ENCODE measurements at regions of chr1 and their contacts with region 1.

Region 1: GRCh38 chr1:151594143-151594625 is 17.7 kb upstream of the SNX27 start:
- DNase-seq: peak; percentile 91
- H3K4me3 Mint-ChIP-seq: peak overlapping the region; percentile 46
- H3K27ac Mint-ChIP-seq: no peak overlapping the region
- H3K4me1 Mint-ChIP-seq: peaks cover 9% of the 10 kb centered on the region
- H3K27me3 Mint-ChIP-seq: peaks cover 3% of the 10 kb centered on the region

Region 2: DNA sequence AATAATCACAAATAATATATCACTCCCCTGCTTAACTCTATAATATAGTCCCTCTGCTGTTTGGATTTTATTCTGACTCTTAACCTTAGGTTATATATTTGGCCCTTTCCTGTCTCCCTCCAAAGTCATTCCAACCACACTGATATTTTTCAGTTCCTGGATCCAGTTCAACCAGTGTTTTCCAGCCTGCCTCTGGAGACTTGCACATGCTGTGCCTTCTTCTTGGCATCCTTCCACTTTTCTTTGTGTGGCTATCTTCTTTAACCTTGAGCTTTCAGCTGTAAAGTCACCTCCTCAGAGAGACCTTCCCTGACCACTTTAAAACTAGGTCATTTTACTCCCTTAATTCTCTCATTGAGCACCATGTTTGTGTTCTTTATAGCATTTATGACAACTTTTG is 638.9 kb before region 1 on chr1:
- CTCF ChIA-PET with region 1: no interaction called
- POLR2A ChIA-PET with region 1: no interaction called
- intact Hi-C with region 1: no loop called
- DNase-seq: no peak
- H3K4me3 Mint-ChIP-seq: no peak overlapping the region
- H3K27ac Mint-ChIP-seq: no peak overlapping the region
- H3K4me1 Mint-ChIP-seq: peaks cover 9% of the 10 kb centered on the region
- H3K27me3 Mint-ChIP-seq: no peaks in the 10 kb centered on the region

Region 3: DNA sequence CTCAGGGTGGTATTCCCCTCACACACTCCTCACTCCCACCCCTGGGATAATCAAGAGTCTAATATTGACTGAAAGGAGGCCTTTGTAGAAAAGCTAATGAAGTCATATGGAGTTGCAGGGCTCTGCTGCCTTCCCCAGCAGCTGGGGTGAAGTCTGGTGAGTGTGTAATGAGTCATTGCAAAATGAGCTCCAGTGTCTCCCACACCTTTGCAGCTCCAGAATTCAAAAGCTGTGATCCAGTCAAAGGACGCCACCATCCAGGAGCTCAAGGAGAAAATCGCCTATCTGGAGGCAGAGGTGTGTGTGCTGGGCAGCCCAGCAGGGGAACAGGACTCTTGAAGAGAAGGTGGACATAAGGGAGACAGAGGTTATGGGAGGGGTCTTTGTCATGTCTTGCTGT is 14.7 kb before region 1 on chr1:
- CTCF ChIA-PET with region 1: interaction called, 10 read pairs
- POLR2A ChIA-PET with region 1: no interaction called
- intact Hi-C with region 1: no loop called
- DNase-seq: no peak
- H3K4me3 Mint-ChIP-seq: no peak overlapping the region
- H3K27ac Mint-ChIP-seq: no peak overlapping the region
- H3K4me1 Mint-ChIP-seq: peaks cover 7% of the 10 kb centered on the region
- H3K27me3 Mint-ChIP-seq: no peaks in the 10 kb centered on the region

Region 4: DNA sequence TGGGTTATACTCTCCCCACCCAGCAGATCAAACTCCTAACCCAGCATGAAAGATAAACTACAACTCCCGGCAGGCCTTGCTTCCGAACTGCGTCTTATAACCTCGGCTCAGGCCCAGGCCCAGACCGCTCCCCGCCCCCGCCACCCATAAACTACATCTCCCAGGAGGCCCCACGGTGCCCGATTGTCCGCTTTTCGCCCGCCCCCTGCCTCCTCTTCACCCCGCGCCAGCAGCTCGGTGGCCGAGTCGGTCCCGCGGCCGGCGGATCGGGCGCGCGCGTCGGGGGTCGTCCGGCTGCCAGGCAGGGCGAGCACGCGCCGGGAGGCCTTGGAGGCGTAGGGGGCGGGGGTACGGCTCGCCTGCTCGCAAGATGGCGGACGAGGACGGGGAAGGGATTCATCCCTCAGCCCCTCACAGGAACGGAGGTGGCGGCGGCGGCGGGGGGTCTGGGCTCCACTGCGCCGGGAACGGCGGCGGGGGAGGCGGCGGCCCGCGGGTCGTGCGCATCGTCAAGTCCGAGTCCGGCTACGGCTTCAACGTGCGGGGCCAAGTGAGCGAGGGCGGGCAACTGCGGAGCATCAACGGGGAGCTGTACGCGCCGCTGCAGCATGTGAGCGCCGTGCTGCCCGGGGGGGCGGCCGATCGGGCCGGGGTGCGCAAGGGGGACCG is 17.8 kb after region 1 on chr1 and contains the start of gene SNX27:
- CTCF ChIA-PET with region 1: interaction called, 10 read pairs
- POLR2A ChIA-PET with region 1: no interaction called
- intact Hi-C with region 1: no loop called
- DNase-seq: peak; percentile 93
- H3K4me3 Mint-ChIP-seq: peak within 1 kb of the TSS; percentile 94
- H3K27ac Mint-ChIP-seq: peak within 1 kb of the TSS; percentile 79
- H3K4me1 Mint-ChIP-seq: peaks cover 49% of the 10 kb centered on the region
- H3K27me3 Mint-ChIP-seq: peaks cover 1% of the 10 kb centered on the region
- total RNA-seq, gene SNX27: 27.1 to 30.7 TPM

Region 5: DNA sequence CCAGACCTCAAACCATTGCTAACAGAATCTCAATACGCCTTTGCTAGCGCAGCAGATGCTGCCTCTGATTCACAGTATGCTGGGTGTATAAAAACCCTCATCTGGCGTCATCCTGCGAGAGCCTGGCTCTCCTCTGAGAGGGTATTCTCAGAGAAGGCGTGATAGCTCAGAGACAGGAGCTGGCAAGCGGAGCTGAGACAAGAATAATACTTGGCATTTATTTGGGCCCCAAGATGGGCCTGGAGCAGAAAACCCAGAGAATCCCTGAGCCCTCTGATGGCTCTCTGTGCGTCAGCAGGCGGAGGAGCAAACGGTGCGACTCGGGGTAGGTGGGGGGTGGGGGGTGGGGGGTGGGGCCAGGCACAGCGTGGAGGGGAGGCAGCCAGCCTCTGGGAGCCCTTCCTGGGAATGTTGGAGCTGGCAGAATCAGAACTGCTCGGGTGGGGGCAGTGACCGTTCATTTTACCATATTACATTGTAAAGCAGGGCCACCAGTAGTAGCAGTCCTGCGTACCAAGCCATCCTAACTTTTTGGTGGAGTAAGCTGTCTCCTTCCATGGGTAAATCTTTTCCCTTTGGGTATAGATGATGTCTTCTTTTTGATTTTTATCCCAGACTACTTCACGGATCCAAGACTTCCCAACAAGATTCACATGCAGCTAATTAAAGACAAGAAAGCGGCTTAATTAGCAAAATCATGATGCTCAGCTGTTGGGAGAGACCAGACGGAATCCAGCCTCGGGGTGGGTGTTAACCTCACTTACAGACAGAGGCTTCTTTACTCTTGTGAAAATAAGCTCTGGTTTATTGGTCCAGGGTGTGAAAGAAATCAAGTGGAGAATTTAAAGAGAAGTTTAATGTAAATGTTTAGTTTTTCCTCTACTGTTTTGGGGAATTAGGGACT is 134.2 kb after region 1 on chr1:
- CTCF ChIA-PET with region 1: interaction called, 21 read pairs
- POLR2A ChIA-PET with region 1: no interaction called
- intact Hi-C with region 1: no loop called
- DNase-seq: no peak
- H3K4me3 Mint-ChIP-seq: no peak overlapping the region
- H3K27ac Mint-ChIP-seq: no peak overlapping the region
- H3K4me1 Mint-ChIP-seq: no peaks in the 10 kb centered on the region
- H3K27me3 Mint-ChIP-seq: peaks cover 41% of the 10 kb centered on the region

Measured in activated CD4-positive, alpha-beta memory T cell treated with anti-CD3 and anti-CD28 coated beads for 36 hours (primary cell).